ENCODE measurements at regions of chr2 and their contacts with region 1.

Region 1: GRCh38 chr2:25131567-25132298 is 36.6 kb downstream of the POMC start:
- DNase-seq: peak in 5 of 14 experiments; percentile 3 to 30 (median 11)
- ATAC-seq: peak; percentile 62
- H3K4me3 ChIP-seq: peak overlapping the region; percentile 25
- H3K4me3 Mint-ChIP-seq: peak overlapping the region; percentile 76
- H3K27ac ChIP-seq: no peak overlapping the region
- H3K27ac Mint-ChIP-seq: no peak overlapping the region
- H3K4me1 ChIP-seq: peaks cover 15% of the 10 kb centered on the region
- H3K4me1 Mint-ChIP-seq: peaks cover 14% of the 10 kb centered on the region
- H3K27me3 ChIP-seq: peaks cover 38 to 58% of the 10 kb centered on the region in 2 experiments
- H3K27me3 Mint-ChIP-seq: peaks cover 63% of the 10 kb centered on the region
- CTCF ChIP-seq: no peak

Region 2: GRCh38 chr2:24021193-24021998 is 1110.3 kb before region 1 on chr2:
- CTCF ChIA-PET with region 1: no interaction called
- POLR2A ChIA-PET with region 1: no interaction called
- intact Hi-C with region 1: no loop called
- DNase-seq: peak in 5 of 14 experiments; percentile 3 to 35 (median 14)
- ATAC-seq: peak; percentile 56
- H3K4me3 ChIP-seq: no peak overlapping the region
- H3K4me3 Mint-ChIP-seq: no peak overlapping the region
- H3K27ac ChIP-seq: no peak overlapping the region
- H3K27ac Mint-ChIP-seq: no peak overlapping the region
- H3K4me1 ChIP-seq: no peaks in the 10 kb centered on the region
- H3K4me1 Mint-ChIP-seq: no peaks in the 10 kb centered on the region
- H3K27me3 ChIP-seq: no peaks in the 10 kb centered on the region
- H3K27me3 Mint-ChIP-seq: no peaks in the 10 kb centered on the region
- CTCF ChIP-seq: no peak

Region 3: GRCh38 chr2:25041928-25042320 is 89.8 kb before region 1 on chr2 and contains the start of gene EFR3B:
- CTCF ChIA-PET with region 1: interaction called, 4 read pairs
- POLR2A ChIA-PET with region 1: no interaction called
- intact Hi-C with region 1: loop called in 1 of 2 experiments (anchors 2 kb)
- DNase-seq: peak; percentile 74 to 95 (median 86)
- ATAC-seq: peak; percentile 91
- H3K4me3 ChIP-seq: peak within 1 kb of the TSS; percentile 58
- H3K4me3 Mint-ChIP-seq: peak within 1 kb of the TSS; percentile 90
- H3K27ac ChIP-seq: no peak within 1 kb of the TSS
- H3K27ac Mint-ChIP-seq: no peak within 1 kb of the TSS
- H3K4me1 ChIP-seq: peaks cover 22% of the 10 kb centered on the region
- H3K4me1 Mint-ChIP-seq: peaks cover 24% of the 10 kb centered on the region
- H3K27me3 ChIP-seq: peaks cover 38 to 39% of the 10 kb centered on the region in 2 experiments
- H3K27me3 Mint-ChIP-seq: peaks cover 40% of the 10 kb centered on the region
- CTCF ChIP-seq: no peak
- total RNA-seq, gene EFR3B: 0.11 TPM in 1 of 2 experiments, not detected in the other

Region 4: GRCh38 chr2:25201265-25201664 is 69.5 kb after region 1 on chr2:
- CTCF ChIA-PET with region 1: no interaction called
- POLR2A ChIA-PET with region 1: no interaction called
- intact Hi-C with region 1: loop called (anchors 2 kb)
- DNase-seq: no peak
- ATAC-seq: no peak
- H3K4me3 ChIP-seq: no peak overlapping the region
- H3K4me3 Mint-ChIP-seq: no peak overlapping the region
- H3K27ac ChIP-seq: no peak overlapping the region
- H3K27ac Mint-ChIP-seq: no peak overlapping the region
- H3K4me1 ChIP-seq: peaks cover 15% of the 10 kb centered on the region
- H3K4me1 Mint-ChIP-seq: peaks cover 14% of the 10 kb centered on the region
- H3K27me3 ChIP-seq: no peaks in the 10 kb centered on the region
- H3K27me3 Mint-ChIP-seq: no peaks in the 10 kb centered on the region
- CTCF ChIP-seq: no peak